AG04450 (cell line): ENCODE measurements at regions of chr2 and their contacts with region 1.

Region 1: DNA sequence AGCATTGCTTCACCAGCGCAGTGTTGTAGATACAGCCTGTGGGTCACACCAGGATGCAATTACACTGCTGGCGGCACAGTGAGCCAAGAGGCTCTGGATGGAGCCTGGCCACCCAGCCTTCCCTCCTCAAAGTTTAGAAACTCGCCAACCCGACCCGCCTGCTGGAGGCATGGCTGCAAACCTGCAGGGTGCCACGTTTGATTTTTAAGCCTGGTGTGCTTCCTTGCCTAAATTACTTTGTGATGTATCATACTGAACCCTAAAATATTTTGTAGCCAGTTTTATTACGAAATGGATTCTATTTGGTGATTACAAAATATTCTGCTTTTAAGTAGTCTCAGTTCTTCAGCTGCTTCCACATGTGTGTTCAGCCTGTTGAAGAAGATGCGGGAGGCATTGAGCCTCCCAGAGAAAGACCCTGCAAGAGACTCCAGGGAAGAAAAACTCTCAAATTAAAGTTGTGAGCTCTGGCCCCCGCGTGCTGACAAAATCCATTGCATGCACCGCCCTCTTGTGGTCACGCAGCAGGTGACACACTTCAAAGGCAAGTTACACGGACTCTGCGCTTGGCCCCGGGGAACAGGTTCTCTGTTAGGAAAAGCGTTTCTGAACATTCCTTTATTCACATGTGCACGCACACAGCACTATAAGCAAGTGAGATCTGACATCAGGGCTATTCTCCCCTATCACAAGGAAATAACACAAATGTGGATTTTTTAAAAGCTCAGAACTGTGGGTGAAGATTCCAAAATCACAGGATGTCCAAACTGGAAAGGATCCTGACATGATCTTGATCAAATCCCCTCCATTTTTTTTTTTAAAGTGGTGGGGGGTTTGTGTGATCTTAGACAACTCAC is 63.0 kb upstream of the TWIST2 start:
- DNase-seq: peak; percentile 27
- H3K4me3 ChIP-seq: no peak overlapping the region
- H3K27ac ChIP-seq: no peak overlapping the region
- H3K27me3 ChIP-seq: peaks cover 20% of the 10 kb centered on the region
- CTCF ChIP-seq: peak; percentile 88

Region 2: DNA sequence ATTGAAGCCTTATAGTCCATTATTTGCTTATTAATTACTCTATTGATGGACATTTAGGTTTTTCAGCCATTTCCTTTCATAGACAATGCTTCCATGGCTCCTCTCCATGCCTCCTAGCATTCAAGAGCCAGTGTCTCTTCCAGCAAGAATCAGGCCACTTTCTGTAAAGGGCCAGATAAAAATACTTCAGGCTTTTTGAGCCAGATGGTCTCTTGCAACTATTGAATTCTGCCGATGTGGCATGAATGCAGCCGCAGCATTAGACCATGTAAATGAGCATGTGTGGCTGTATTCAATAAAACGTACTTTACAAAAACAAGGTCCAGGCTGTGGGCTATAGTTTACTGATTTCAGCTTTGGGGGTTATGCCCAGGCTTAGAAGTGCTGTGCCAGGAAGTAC is 426.1 kb before region 1 on chr2:
- CTCF ChIA-PET with region 1: interaction called, 17 read pairs
- POLR2A ChIA-PET with region 1: no interaction called
- DNase-seq: no peak
- H3K4me3 ChIP-seq: no peak overlapping the region
- H3K27ac ChIP-seq: no peak overlapping the region
- H3K27me3 ChIP-seq: no peaks in the 10 kb centered on the region
- CTCF ChIP-seq: no peak

Region 3: GRCh38 chr2:238370823-238371372 is 414.0 kb before region 1 on chr2:
- CTCF ChIA-PET with region 1: interaction called, 71 read pairs
- POLR2A ChIA-PET with region 1: no interaction called
- DNase-seq: peak; percentile 32
- H3K4me3 ChIP-seq: no peak overlapping the region
- H3K27ac ChIP-seq: no peak overlapping the region
- H3K27me3 ChIP-seq: no peaks in the 10 kb centered on the region
- CTCF ChIP-seq: peak; percentile 96

Region 4: DNA sequence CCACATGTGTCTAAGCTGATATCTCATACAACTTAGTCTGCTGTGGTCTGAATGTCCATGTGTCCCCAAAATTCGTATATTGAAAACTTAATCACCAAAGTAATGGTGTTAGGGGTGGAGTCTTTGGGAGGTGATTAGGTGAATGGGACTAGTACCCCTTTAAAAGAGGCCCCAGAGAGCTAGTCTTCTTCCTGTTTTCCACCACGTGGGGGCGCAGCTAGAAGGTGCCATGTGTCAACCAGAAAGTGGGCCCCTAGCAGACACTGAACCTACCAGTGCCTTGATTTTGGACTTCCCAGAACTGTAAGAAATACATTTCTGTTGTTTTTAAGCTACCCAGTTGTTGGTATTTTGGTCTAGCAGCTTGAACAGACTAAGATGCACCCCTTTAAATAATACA is 271.6 kb before region 1 on chr2:
- CTCF ChIA-PET with region 1: interaction called, 46 read pairs
- POLR2A ChIA-PET with region 1: no interaction called
- DNase-seq: no peak
- H3K4me3 ChIP-seq: no peak overlapping the region
- H3K27ac ChIP-seq: no peak overlapping the region
- H3K27me3 ChIP-seq: no peaks in the 10 kb centered on the region
- CTCF ChIP-seq: peak; percentile 60

Region 5: DNA sequence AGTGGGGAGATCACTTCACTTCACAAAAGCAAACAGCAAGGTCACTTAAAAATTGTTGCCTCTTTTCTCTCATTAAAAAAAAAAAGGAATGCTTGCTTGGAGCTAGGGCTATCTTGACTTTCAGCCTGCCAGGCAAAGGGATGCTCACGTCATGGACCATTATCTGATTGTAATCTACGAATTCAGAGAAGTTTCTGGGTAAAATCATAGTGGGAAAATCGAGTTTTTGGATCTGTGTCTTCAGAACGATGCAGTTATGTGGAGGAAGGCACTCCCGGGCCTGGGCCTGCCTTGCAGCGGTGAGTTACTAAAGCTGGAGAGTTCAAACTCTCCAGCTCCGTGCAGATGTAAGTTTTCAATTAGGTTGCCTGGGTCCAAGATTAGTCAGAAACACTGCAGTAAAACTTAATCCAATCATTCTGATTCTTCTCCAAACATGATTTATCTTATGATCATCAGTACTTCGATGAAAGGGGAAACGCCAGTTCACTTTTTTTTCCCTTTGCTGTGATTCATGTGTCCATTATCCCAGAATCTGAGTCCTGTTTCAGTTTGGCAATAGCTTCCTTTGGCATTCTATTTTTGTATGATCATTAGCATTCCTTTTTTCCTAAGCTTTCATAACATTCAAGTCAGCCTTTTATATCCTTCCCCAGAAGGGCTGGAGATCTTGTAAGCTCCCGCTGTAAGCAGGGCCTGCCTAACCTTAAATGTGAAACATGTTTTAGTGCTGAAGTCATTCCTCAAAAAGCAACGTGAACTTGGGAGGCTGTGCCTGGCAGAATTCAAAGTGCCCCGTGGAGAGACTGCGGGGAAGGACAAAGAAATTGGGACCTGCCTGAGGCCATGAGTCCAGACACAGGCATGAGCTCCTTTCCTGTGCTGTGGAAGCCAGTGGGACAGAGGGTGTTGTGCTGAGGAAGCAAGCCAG is 56.3 kb before region 1 on chr2:
- CTCF ChIA-PET with region 1: interaction called, 15 read pairs
- POLR2A ChIA-PET with region 1: no interaction called
- DNase-seq: peak; percentile 69
- H3K4me3 ChIP-seq: no peak overlapping the region
- H3K27ac ChIP-seq: peak overlapping the region; percentile 92
- H3K27me3 ChIP-seq: no peaks in the 10 kb centered on the region
- CTCF ChIP-seq: no peak

Region 6: DNA sequence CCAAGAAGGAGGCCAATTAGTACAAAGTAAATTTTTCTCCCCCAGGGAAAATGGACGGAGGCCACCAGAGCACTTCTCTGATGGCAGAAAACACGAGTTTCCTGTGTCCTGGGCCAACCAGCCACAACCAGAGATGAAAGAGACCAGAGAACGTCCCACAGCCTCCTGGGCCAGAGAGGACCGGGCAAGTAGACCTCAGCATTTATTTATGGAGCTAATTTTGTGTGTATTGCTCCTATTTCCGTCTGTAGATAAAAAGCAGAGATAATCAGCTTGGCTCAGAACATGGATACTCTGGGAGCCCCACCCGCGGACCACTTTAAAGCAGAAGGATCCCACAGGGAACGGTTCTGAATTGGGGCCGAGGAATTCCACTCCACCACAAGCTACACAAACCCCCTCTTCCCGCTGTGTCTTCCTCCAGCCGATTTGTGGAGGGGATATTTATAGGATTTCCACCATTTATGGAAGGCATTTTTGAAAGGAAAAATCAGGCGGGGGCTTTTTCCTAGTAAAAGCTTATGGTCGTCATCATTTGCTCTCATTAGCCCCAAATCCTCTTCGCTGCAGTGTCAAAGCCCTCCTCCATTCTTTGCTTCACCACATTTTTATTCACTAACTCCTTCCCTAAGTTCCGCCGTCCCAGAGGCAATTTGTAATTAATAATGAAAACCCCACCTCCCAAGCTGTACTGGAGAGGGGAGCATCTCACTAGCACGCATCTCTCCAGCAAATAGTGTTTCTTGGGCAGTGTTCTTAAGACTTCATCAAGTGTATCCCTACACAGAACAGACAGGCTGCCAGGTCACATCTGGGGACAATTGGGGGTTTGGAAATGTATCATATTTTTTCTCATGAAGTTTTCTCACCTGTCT is 19.3 kb after region 1 on chr2:
- CTCF ChIA-PET with region 1: interaction called, 15 read pairs
- POLR2A ChIA-PET with region 1: no interaction called
- DNase-seq: no peak
- H3K4me3 ChIP-seq: no peak overlapping the region
- H3K27ac ChIP-seq: no peak overlapping the region
- H3K27me3 ChIP-seq: peaks cover 19% of the 10 kb centered on the region
- CTCF ChIP-seq: no peak

Region 7: DNA sequence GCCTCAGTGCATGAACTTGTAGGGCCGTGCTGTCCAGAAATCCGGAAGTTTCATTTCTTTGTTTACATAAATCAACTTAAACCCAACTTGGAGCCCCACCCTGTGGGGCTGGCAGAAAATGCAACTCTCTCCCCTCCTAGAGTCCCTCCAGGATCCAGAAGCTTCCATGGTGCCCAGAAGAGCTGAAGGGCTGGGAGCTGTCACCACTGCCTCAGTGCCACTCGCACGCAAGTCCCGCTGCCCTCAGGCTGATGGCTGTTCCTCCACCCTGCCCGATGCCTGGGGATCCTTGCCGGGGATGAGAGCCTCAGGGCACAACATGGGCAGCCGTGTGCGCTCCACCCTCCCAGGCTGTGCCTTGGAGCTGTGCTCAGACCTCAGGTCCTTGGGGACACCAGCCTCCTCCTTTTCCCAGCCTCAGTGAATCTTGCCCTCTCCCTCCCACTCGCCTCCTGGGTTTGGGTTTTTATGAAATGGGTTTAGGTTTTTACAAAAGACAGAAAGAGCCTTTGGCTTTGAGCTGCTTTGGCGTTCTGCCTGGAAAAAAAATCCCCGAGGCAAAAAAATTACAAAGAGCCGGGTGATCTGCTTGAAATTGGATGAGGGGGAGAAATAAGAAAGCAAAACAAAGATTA is 218.2 kb after region 1 on chr2:
- CTCF ChIA-PET with region 1: interaction called, 12 read pairs
- POLR2A ChIA-PET with region 1: no interaction called
- DNase-seq: peak; percentile 29
- H3K4me3 ChIP-seq: peak overlapping the region; percentile 25
- H3K27ac ChIP-seq: peak overlapping the region; percentile 1
- H3K27me3 ChIP-seq: peaks cover 29% of the 10 kb centered on the region
- CTCF ChIP-seq: peak; percentile 64